HEK293T (cell line): ENCODE measurements at regions of chr4 and their contacts with region 1.

Region 1: DNA sequence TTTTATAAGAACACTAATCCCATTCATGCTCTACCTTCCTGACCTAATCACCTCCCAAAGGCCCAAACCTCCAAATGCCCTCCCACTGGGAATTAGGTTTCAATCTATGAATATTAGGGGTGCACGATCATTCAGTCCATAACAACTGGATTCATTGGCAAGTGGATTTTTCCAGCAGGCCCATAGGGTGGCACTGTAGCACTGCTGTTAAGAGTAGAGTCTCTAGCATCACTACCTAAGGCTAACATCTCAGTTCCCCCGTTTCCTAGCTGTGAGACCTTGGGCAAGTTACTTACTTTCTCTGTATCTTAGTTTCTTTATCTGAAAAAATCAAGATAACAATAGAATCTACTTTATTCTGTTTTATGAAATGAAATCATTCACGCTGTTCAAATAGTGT is 315.8 kb downstream of the STIM2 start:
- DNase-seq: peak; percentile 7

Region 2: DNA sequence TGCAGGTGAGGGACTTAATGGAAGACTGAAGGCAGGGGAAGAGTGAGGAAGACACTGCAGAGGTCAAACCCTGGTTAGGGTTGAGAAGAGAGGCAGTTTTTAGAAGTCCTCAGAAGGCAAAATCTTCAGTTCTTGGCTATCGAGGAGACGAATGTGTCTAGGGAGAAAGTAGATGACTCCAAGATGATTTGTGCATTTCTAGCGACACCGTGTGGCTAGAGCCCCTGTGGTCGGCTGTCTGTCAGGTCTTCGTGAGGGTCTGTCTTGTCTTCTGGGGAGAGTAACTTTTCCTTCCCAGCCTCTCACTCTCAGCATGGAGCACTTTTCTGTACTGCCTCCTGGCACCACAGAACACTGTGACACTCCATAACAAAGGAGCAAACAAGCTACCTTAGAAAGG is 142.3 kb after region 1 on chr4:
- CTCF ChIA-PET with region 1: interaction called, 19 read pairs
- POLR2A ChIA-PET with region 1: no interaction called
- DNase-seq: peak; percentile 53